Pancreas (tissue), 10 donors: ENCODE measurements at regions of chr3 and their contacts with region 1.

Region 1: DNA sequence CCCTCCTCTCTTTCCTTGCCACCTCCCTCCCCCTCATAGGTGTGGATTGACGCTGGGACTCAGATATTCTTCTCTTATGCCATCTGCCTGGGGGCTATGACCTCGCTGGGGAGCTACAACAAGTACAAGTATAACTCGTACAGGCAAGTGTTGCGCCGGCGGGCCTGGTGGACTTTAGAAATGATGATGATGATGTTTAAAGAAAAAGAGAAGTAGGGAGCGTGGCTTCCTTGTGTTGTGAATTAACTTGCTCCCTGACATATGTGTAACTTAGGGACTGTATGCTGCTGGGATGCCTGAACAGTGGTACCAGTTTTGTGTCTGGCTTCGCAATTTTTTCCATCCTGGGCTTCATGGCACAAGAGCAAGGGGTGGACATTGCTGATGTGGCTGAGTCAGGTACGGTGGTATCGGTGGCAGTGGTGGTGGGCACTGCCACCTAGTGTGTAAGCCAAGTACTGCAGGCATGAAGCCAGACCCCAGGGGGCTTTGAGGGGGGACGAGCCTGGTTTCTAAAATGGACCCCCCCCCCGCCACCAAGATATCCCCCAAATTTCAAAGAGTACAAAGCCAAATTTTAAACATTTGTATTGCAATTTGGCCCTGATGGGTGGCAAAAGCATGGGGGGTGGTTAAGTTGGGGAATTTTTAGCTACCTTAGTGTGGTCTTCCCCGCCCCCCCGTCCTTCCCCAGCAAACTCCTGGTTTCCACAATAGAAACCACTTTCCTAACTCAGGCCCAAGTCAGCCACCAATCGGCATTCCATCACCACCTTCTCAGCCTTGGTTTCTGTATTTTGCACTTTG is 65.6 kb downstream of the SLC6A6 start:
- DNase-seq: peak in 3 of 6 donors; percentile 47 to 57 (median 48)
- ATAC-seq: peak; percentile 55 to 92 (median 86)
- H3K4me3 ChIP-seq: no peak overlapping the region
- H3K27ac ChIP-seq: no peak overlapping the region
- H3K4me1 ChIP-seq: no peaks in the 10 kb centered on the region
- H3K27me3 ChIP-seq: no peaks in the 10 kb centered on the region
- CTCF ChIP-seq: peak; percentile 61 to 92 (median 78)

Region 2: GRCh38 chr3:13901935-13902584 is 566.0 kb before region 1 on chr3:
- intact Hi-C with region 1: loop called in 2 of 3 experiments (anchors 10 kb)
- DNase-seq: no peak
- ATAC-seq: no peak
- H3K4me3 ChIP-seq: no peak overlapping the region
- H3K27ac ChIP-seq: no peak overlapping the region
- H3K4me1 ChIP-seq: no peaks in the 10 kb centered on the region
- H3K27me3 ChIP-seq: no peaks in the 10 kb centered on the region
- CTCF ChIP-seq: no peak

Region 3: DNA sequence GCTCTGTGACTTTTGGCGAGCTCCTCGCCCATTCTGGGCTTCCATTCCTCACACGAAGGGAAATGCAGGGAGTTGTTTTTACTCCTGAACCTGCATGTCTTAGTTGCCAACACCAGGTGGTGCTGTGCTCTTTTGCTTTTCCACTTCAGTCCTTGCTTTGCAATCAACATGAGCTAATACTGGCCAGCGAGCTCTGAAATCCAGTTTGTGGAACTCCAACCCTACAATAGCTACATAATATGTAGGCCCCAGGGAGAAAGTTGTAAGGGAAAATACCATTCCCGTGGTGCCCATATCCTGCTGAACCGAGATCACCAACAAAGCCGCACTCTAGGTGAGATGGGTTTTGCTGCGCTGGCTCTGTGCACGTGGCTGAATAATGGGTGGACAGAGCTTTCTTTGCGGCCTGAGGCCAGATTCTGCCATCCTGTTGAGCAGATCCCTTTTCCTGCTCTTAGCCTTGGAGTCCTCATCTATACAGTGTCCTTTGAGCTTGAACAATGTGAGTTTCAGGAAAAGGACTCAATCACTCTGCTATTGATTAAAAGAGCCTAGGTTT is 264.4 kb before region 1 on chr3:
- intact Hi-C with region 1: loop called in 2 of 3 experiments (anchors 5 to 10 kb)
- DNase-seq: peak in 3 of 6 donors; percentile 41 to 73 (median 53)
- ATAC-seq: peak; percentile 77 to 91 (median 86)
- H3K4me3 ChIP-seq: no peak overlapping the region
- H3K27ac ChIP-seq: no peak overlapping the region
- H3K4me1 ChIP-seq: peaks cover 0 to 5% (median 4%) of the 10 kb centered on the region in 3 donors
- H3K27me3 ChIP-seq: no peaks in the 10 kb centered on the region
- CTCF ChIP-seq: peak; percentile 46 to 79 (median 78)

Region 4: DNA sequence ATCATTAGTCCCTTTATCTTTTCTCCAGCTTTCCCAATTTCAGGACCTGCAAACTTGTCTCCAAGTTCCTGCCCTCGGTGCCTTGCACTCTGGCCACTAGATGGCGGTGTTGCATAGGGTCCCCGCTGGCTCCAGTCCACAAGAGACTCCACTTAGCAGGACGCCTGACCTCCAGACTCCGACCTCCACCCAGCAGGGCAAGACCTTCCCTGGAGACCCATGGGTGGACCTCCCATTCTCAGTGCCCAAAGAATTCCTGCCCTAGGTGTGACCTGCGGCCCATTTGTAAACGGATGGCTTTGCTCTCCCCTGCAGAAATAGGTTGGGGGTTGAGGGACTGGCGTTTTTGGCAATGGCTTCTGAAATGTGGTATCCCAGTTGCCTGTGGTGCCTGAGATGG is 206.8 kb before region 1 on chr3:
- intact Hi-C with region 1: loop called in 2 of 3 experiments (anchors 2 to 5 kb)
- DNase-seq: peak; percentile 59 to 93 (median 84)
- ATAC-seq: peak; percentile 68 to 97 (median 91)
- H3K4me3 ChIP-seq: no peak overlapping the region
- H3K27ac ChIP-seq: no peak overlapping the region
- H3K4me1 ChIP-seq: no peaks in the 10 kb centered on the region
- H3K27me3 ChIP-seq: no peaks in the 10 kb centered on the region
- CTCF ChIP-seq: peak; percentile 93 to 98 (median 96)

Region 5: DNA sequence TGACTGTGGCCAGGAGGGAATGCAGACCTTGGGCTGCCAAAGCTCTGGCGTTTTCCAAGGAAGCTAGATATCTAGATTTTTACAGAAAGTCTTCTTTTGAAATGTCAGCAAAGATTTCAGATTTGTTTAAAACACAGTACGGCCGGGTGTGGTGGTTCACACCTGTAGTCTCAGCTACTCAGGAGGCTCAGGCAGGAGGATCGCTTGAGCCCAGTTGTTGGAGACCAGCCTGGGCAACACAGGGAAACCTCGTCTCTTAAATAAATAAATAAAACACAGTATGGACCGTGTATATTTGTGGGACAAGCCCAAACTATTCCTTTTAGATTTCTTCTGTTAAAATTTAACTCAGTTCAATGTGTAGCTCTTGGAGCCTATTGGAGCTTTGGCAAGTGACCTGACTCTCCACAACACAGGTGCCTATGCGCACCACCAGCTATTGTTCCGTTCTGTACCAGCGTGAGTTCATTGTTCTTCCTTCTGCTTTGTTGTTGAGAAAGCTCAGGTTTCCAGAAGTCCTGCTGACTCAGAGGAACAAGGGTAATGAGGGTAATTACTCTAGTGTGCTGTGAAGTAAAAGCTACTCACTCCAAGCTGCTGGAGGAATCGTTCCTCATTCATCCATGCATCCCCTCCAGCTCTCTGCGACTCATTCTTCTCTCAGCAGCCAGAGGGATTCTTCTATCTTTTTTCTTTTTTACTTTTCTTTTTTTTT is 138.7 kb before region 1 on chr3:
- intact Hi-C with region 1: no loop called
- DNase-seq: peak in 1 of 6 donors; percentile 20
- ATAC-seq: peak in 3 of 4 donors; percentile 58 to 69 (median 66)
- H3K4me3 ChIP-seq: no peak overlapping the region
- H3K27ac ChIP-seq: no peak overlapping the region
- H3K4me1 ChIP-seq: no peaks in the 10 kb centered on the region
- H3K27me3 ChIP-seq: no peaks in the 10 kb centered on the region
- CTCF ChIP-seq: no peak